ENCODE measurements at regions of chr9 and their contacts with region 1.

Region 1: DNA sequence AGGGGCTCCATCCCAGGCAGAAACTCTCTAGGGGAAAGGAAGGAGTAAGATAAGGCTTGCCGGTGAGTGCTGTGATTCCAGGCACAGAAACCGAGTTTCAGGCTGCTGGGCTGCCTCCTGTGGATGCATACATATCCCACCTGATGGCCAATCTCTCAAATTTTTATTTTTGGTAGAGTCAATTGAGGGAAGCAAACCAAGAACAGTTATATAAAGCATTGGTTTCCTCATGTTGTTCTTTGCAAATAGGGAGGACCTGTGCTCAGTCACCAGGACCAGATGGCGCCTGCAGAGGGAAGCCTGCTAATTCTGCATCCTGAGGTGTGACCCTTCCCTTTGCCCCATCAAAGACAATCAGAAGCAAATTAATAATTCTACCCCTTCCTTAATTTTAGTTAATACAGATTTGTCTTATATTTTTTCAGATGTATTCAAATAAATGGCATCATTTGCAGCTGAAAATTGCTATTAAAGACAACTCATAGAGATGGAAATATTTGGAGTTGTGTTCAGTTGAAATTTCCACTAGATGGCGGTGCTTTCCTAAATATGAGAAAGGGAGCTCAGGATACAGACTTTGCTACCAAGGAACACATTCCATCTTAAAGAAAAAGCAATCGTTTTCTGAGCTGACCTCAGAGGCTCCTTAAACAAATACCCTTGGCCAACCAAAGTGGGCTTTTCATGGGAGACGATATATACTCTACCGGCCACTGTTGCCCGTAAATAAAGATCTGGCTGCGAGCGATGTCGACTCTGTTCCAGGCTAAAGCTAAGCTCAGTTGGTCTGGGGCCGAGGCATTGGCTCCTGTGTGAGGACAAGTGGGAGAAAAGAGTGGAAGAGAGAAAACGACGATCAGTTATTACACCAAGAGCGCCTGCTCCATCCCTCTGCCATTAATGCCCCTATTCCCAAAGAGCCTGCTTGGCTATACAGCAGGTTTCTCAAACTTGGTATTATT is 225.7 kb upstream of the KLF9 start:
- DNase-seq: peak; percentile 78
- H3K4me3 ChIP-seq: peak overlapping the region; percentile 54
- H3K27ac ChIP-seq: no peak overlapping the region
- H3K4me1 ChIP-seq: no peaks in the 10 kb centered on the region
- H3K27me3 ChIP-seq: peaks cover 27% of the 10 kb centered on the region

Region 2: GRCh38 chr9:70747261-70747718 is 107.2 kb after region 1 on chr9:
- in situ Hi-C with region 1: no loop called
- DNase-seq: no peak
- H3K4me3 ChIP-seq: no peak overlapping the region
- H3K27ac ChIP-seq: no peak overlapping the region
- H3K4me1 ChIP-seq: no peaks in the 10 kb centered on the region
- H3K27me3 ChIP-seq: no peaks in the 10 kb centered on the region; the same call in 1 of the 2 replicates

Region 3: GRCh38 chr9:70911791-70912190 is 271.7 kb after region 1 on chr9:
- in situ Hi-C with region 1: loop called (anchors 10 kb)
- DNase-seq: no peak
- H3K4me3 ChIP-seq: no peak overlapping the region
- H3K27ac ChIP-seq: no peak overlapping the region
- H3K4me1 ChIP-seq: no peaks in the 10 kb centered on the region
- H3K27me3 ChIP-seq: peaks cover 13% of the 10 kb centered on the region